ENCODE measurements at regions of chr1 and their contacts with region 1.

Region 1: DNA sequence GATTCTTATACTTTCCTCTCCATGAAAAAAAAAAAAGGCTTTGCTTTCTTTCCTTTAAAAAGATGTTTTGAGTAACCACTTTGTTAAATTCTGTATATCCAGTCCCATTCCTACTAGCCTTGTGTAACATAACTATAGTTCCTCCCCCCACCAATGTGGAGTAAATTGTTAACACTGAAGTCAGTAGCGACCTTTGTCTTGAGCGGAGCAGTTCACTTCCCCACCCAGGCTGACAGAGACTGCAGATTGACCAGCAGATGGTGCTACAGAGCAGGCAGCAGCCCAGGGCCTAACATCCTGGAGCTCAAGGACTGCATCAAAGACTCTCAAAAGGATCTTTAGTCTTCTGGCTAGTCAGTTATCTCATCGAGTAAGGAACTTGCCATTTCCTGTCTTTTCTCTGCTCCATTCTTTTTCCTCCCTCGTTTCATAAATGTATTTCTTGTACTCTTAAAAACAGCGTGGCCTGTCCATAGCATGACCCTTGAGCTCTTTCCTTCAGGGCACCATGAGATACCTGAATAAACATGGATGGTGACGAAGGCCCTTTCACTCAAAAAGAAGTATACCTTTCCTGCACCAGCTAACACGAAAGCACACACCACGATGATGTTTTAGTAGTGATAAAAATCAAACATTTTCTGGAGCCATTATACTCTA is 503.5 kb upstream of the PKN2 start:
- DNase-seq: peak; percentile 55
- H3K4me3 ChIP-seq: no peak overlapping the region
- H3K27ac ChIP-seq: no peak overlapping the region
- H3K27me3 ChIP-seq: no peaks in the 10 kb centered on the region
- CTCF ChIP-seq: peak; percentile 100

Region 2: DNA sequence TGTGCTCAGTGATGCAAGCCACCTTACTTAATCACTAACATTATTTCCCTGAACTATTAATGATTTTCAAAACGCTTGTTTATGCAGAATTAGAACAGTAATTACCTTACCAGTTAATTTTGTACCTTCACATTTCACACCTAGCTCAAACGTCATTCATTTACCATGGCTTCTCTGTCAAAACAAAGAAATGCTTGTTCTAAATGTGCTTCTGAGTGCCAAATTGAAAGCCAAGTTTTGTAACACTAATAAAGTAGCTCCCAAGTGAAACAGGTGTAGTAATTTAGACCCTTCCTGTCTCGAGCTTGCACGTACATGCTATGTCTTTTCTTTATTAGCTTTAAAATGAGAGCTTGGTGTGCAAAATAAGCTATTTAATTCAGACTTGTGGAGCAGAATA is 30.2 kb before region 1 on chr1:
- CTCF ChIA-PET with region 1: interaction called, 18 read pairs
- POLR2A ChIA-PET with region 1: no interaction called
- DNase-seq: no peak
- H3K4me3 ChIP-seq: no peak overlapping the region
- H3K27ac ChIP-seq: no peak overlapping the region
- H3K27me3 ChIP-seq: no peaks in the 10 kb centered on the region
- CTCF ChIP-seq: no peak

Region 3: DNA sequence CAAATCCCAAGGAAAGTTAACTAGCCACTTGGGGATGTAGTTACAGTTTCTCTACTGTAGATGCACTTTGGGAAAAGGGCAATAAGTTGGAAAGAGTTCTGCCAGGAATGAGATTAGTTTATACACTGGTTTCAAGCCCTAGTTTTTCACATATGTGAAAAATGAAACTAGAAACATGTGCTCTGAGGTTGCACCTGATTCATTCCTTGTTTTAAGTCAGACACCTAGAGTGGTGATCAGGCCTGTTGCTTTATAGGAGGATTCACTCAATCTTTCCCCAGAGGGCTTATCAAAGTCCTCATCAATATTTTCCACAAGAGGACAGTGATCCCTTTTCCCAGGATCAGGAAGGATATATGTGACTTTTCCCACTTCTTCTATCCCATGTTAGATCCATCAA is 12.5 kb before region 1 on chr1:
- CTCF ChIA-PET with region 1: interaction called, 23 read pairs
- POLR2A ChIA-PET with region 1: no interaction called
- DNase-seq: no peak
- H3K4me3 ChIP-seq: no peak overlapping the region
- H3K27ac ChIP-seq: no peak overlapping the region
- H3K27me3 ChIP-seq: no peaks in the 10 kb centered on the region
- CTCF ChIP-seq: no peak

Region 4: GRCh38 chr1:88191917-88192316 is 11.3 kb after region 1 on chr1:
- CTCF ChIA-PET with region 1: interaction called, 43 read pairs
- POLR2A ChIA-PET with region 1: no interaction called
- DNase-seq: no peak
- H3K4me3 ChIP-seq: no peak overlapping the region
- H3K27ac ChIP-seq: no peak overlapping the region
- H3K27me3 ChIP-seq: no peaks in the 10 kb centered on the region
- CTCF ChIP-seq: no peak

Region 5: DNA sequence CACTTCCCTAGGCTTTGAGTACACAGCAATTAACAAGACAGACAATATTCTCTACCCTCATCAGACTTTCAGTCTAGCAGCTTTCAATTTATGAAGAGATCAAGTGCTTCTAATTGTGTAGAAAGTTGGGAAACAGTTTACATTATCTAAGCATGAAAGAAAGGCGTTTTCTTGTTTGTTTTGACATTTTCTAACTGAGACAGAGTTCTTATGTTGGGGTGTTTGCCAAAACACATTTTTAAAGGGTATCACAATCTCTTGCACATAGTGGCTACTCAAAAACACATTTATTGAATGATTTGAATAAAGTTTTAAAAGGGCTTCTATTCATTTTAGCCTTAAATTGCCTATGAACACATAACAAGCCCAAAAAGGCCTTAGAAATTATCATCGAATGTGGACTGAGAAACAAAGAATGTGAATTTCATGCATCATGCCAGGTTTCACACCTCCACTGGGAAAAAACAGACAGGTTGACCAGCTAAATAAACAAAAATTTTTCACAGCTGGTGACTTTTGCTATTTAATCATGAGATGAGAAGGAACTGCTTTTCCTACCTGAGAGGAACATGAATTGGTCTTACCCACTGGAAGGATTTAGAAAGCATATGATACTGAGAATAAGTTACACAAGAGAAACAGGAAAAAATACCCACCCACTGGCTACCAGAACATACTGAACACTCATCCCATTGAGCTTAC is 109.0 kb after region 1 on chr1:
- CTCF ChIA-PET with region 1: no interaction called
- POLR2A ChIA-PET with region 1: no interaction called
- DNase-seq: no peak
- H3K4me3 ChIP-seq: no peak overlapping the region
- H3K27ac ChIP-seq: no peak overlapping the region
- H3K27me3 ChIP-seq: no peaks in the 10 kb centered on the region
- CTCF ChIP-seq: no peak

Region 6: DNA sequence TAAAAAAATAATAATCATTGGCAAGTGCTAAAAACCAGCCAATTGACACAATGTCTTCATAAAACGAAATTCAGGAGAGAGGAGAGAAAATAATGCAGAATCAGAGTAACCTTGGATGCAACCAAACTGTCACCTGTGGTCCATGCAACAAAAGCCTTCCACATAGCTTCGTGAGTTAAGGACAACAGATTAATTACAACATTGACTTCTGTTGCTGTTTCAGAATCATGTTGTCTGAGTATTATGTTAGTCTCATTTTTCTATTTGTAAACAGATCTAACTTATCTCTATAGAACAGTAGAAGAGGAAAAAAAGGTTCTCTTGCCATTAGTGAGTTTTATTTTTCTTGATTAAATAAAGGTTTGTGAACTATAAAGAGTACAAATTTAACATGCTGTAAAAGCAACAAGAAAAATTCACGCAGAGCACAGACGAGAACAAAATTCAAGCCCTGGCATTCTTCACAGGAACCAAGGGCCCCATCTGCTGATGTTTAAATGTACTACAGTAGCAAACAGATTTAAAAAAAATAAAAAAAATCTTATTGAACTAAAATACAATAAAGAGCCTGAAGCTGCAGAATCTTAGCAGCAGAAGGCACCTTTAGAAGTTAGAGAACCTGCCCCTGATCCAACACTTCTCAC is 122.4 kb after region 1 on chr1:
- CTCF ChIA-PET with region 1: interaction called, 52 read pairs
- POLR2A ChIA-PET with region 1: no interaction called
- DNase-seq: peak; percentile 24
- H3K4me3 ChIP-seq: no peak overlapping the region
- H3K27ac ChIP-seq: no peak overlapping the region
- H3K27me3 ChIP-seq: no peaks in the 10 kb centered on the region
- CTCF ChIP-seq: peak; percentile 66